ENCODE measurements at regions of chr20 and their contacts with region 1.

Region 1: DNA sequence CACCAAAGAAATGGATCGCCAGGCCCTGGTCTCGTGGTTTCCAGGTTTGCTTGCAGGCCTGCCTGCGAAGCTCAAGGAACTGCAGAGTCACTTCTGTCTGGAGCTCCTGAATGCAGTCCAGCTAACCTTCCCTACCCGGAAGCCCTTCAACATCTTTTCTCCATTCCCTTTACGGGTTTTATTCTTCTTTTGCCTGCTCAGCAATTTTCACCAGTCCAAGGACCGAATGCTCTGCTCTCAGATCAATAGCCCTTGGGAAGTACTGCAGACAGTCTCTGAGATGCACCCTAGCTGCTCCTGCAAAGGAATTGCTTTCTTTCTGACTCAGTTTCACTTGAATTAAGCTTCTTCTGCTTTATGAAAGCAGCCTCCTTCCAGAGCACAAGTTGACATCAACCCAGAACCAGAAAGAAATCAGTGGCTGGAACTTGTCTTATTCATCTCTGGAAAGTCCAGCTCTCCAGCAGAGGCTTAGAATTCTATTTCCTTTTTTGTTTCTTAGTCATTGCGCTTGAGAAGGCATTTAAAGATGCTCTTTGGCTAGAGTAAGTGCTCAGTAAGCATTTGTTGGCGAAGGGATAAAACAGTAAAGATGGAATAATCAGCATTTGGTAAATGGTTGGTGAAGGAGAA is 18.7 kb upstream of the YWHAB start:
- DNase-seq: no peak
- ATAC-seq: no peak
- H3K4me3 ChIP-seq: no peak overlapping the region
- H3K4me3 Mint-ChIP-seq: peak overlapping the region; percentile 56
- H3K27ac ChIP-seq: no peak overlapping the region
- H3K27ac Mint-ChIP-seq: no peak overlapping the region
- H3K4me1 ChIP-seq: peaks cover 5% of the 10 kb centered on the region
- H3K4me1 Mint-ChIP-seq: peaks cover 7 to 10% of the 10 kb centered on the region in 2 donors
- H3K27me3 ChIP-seq: peaks cover 7% of the 10 kb centered on the region
- H3K27me3 Mint-ChIP-seq: peaks cover 8 to 13% of the 10 kb centered on the region in 2 donors
- CTCF ChIP-seq: no peak

Region 2: DNA sequence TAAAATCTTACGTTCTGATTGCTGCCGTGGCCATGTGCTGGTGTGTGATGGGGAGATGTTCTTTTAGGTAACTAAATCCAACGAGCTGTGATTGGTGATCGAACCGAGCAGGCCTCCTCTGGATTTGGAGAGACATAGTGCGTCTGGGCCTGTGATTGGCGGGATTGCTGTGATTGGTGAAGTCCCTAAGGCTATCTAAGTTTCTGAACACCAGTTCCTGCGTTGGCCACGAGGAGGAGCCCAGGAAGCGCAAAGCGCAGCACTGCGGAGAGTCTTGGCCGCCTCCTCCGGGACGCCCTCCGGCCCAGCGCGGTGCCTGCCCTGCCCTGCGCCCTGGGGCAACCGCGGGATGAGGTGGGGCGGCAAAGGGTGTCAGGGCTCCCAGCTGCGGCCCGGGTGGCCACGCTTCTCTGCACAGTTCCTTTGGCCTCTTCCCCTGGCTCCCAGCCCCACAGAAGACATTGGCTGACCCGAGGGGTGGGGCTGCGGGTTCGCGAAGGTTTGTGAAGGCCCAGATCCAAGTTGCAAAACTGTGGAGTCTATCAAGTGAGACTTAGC is 478.3 kb before region 1 on chr20:
- intact Hi-C with region 1: loop called (anchors 2 kb)
- DNase-seq: peak; percentile 61 to 79
- ATAC-seq: peak; percentile 73 to 90 (median 86)
- H3K4me3 ChIP-seq: no peak overlapping the region
- H3K4me3 Mint-ChIP-seq: no peak overlapping the region
- H3K27ac ChIP-seq: no peak overlapping the region
- H3K27ac Mint-ChIP-seq: no peak overlapping the region
- H3K4me1 ChIP-seq: peaks cover 6% of the 10 kb centered on the region
- H3K4me1 Mint-ChIP-seq: peaks cover 11 to 24% of the 10 kb centered on the region in 2 donors
- H3K27me3 ChIP-seq: peaks cover 3% of the 10 kb centered on the region
- H3K27me3 Mint-ChIP-seq: peaks cover 7 to 10% of the 10 kb centered on the region in 2 donors
- CTCF ChIP-seq: peak; percentile 72

Region 3: GRCh38 chr20:44747166-44748004 is 119.4 kb before region 1 on chr20:
- intact Hi-C with region 1: loop called (anchors 5 kb)
- DNase-seq: peak; percentile 41 to 73
- ATAC-seq: peak in 2 of 3 donors; percentile 37 to 42
- H3K4me3 ChIP-seq: no peak overlapping the region
- H3K4me3 Mint-ChIP-seq: peak overlapping the region; percentile 57
- H3K27ac ChIP-seq: no peak overlapping the region
- H3K27ac Mint-ChIP-seq: no peak overlapping the region
- H3K4me1 ChIP-seq: peaks cover 6% of the 10 kb centered on the region
- H3K4me1 Mint-ChIP-seq: peaks cover 6 to 17% of the 10 kb centered on the region in 2 donors
- H3K27me3 ChIP-seq: peaks cover 17% of the 10 kb centered on the region
- H3K27me3 Mint-ChIP-seq: peaks cover 37 to 73% of the 10 kb centered on the region in 2 donors
- CTCF ChIP-seq: peak; percentile 39